Heart left ventricle (tissue), 16 donors: ENCODE measurements at regions of chr17 and their contacts with region 1.

Region 1: GRCh38 chr17:28842282-28843012 is at the start of gene FAM222B:
- DNase-seq: peak; percentile 84 to 94 (median 90)
- ATAC-seq: peak; percentile 93 to 100 (median 100)
- H3K4me3 ChIP-seq: peak within 1 kb of the TSS; percentile 53 to 94 (median 82)
- H3K27ac ChIP-seq: peak within 1 kb of the TSS; percentile 54 to 89 (median 78)
- H3K4me1 ChIP-seq: peaks cover 0 to 33% (median 8%) of the 10 kb centered on the region in 12 donors
- H3K27me3 ChIP-seq: no peaks in the 10 kb centered on the region
- CTCF ChIP-seq: peak in 2 of 12 donors; percentile 14 to 22
- POLR2A ChIP-seq: peak in 1 of 2 donors; percentile 71
- total RNA-seq, gene FAM222B: 14.4 to 33.2 (median 16.7) TPM

Region 2: DNA sequence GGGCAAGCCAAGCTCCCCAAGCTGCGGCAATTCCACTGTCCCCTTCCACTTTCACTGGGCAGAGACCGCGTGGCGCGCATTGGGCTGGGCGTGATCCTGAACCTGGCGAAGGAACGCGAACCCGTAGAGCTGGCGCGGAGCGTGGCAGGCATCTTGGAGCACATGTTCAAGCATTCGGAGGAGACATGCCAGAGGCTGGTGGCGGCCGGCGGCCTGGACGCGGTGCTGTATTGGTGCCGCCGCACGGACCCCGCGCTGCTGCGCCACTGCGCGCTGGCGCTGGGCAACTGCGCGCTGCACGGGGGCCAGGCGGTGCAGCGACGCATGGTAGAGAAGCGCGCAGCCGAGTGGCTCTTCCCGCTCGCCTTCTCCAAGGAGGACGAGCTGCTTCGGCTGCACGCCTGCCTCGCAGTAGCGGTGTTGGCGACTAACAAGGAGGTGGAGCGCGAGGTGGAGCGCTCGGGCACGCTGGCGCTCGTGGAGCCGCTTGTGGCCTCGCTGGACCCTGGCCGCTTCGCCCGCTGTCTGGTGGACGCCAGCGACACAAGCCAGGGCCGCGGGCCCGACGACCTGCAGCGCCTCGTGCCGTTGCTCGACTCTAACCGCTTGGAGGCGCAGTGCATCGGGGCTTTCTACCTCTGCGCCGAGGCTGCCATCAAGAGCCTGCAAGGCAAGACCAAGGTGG is 461.2 kb before region 1 on chr17:
- intact Hi-C with region 1: no loop called
- DNase-seq: no peak
- ATAC-seq: peak in 3 of 4 donors; percentile 27 to 35 (median 29)
- H3K4me3 ChIP-seq: peak overlapping the region in 8 of 12 donors; percentile 2 to 25 (median 10)
- H3K27ac ChIP-seq: no peak overlapping the region
- H3K4me1 ChIP-seq: peaks cover 0 to 25% (median 4%) of the 10 kb centered on the region in 12 donors
- H3K27me3 ChIP-seq: peaks cover 0 to 8% (median 0%) of the 10 kb centered on the region in 9 donors
- CTCF ChIP-seq: peak in 4 of 12 donors; percentile 7 to 25 (median 16)
- POLR2A ChIP-seq: no peak

Region 3: DNA sequence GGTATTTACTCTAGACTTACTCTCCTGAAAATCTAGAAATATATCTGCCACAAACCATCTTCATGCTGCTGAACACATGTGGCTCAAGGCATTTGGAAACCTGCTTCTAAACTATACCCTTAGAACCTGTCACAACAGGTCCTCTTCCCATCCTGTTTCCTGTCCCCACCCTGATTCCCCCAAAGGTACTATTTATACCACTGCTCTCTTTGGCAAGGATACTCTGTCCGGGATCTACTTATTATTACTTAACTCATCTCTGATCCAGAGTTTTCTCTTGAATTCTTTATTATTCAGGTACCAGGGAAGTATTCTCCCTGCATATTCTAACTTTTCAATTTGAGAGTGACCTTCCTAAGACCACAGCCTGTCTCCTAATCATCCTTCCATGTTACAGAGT is 65.3 kb before region 1 on chr17:
- intact Hi-C with region 1: loop called in 2 of 10 experiments (anchors 5 to 10 kb)
- DNase-seq: no peak
- ATAC-seq: peak in 1 of 4 donors; percentile 62
- H3K4me3 ChIP-seq: no peak overlapping the region
- H3K27ac ChIP-seq: peak overlapping the region in 1 of 12 donors; percentile 1
- H3K4me1 ChIP-seq: peaks cover 0 to 17% (median 10%) of the 10 kb centered on the region in 12 donors
- H3K27me3 ChIP-seq: no peaks in the 10 kb centered on the region
- CTCF ChIP-seq: no peak
- POLR2A ChIP-seq: no peak

Region 4: GRCh38 chr17:28796062-28796461 is 46.4 kb before region 1 on chr17:
- intact Hi-C with region 1: loop called in 1 of 10 experiments (anchors 5 kb)
- DNase-seq: no peak
- ATAC-seq: no peak
- H3K4me3 ChIP-seq: no peak overlapping the region
- H3K27ac ChIP-seq: no peak overlapping the region
- H3K4me1 ChIP-seq: peaks cover 0 to 12% (median 0%) of the 10 kb centered on the region in 12 donors
- H3K27me3 ChIP-seq: no peaks in the 10 kb centered on the region
- CTCF ChIP-seq: no peak
- POLR2A ChIP-seq: no peak

Region 5: GRCh38 chr17:28871056-28871579 is 28.7 kb after region 1 on chr17:
- intact Hi-C with region 1: no loop called
- DNase-seq: peak in 1 of 5 donors; percentile 25
- ATAC-seq: no peak
- H3K4me3 ChIP-seq: no peak overlapping the region
- H3K27ac ChIP-seq: peak overlapping the region in 1 of 12 donors; percentile 40
- H3K4me1 ChIP-seq: no peaks in the 10 kb centered on the region
- H3K27me3 ChIP-seq: no peaks in the 10 kb centered on the region
- CTCF ChIP-seq: no peak
- POLR2A ChIP-seq: no peak

Region 6: GRCh38 chr17:28883967-28884702 is 41.7 kb after region 1 on chr17:
- intact Hi-C with region 1: no loop called
- DNase-seq: no peak
- ATAC-seq: no peak
- H3K4me3 ChIP-seq: no peak overlapping the region
- H3K27ac ChIP-seq: no peak overlapping the region
- H3K4me1 ChIP-seq: peaks cover 0 to 16% (median 0%) of the 10 kb centered on the region in 12 donors
- H3K27me3 ChIP-seq: no peaks in the 10 kb centered on the region
- CTCF ChIP-seq: no peak
- POLR2A ChIP-seq: no peak

Region 7: GRCh38 chr17:28896884-28897768 is 54.7 kb after region 1 on chr17 and contains the start of gene FLOT2:
- intact Hi-C with region 1: loop called in 2 of 10 experiments (anchors 10 kb)
- DNase-seq: peak; percentile 63 to 82 (median 64)
- ATAC-seq: peak; percentile 25 to 87 (median 77)
- H3K4me3 ChIP-seq: peak within 1 kb of the TSS; percentile 72 to 98 (median 92)
- H3K27ac ChIP-seq: peak within 1 kb of the TSS; percentile 60 to 97 (median 86)
- H3K4me1 ChIP-seq: peaks cover 3 to 69% (median 31%) of the 10 kb centered on the region in 12 donors
- H3K27me3 ChIP-seq: no peaks in the 10 kb centered on the region
- CTCF ChIP-seq: peak in 6 of 12 donors; percentile 9 to 45 (median 20)
- POLR2A ChIP-seq: peak in 1 of 2 donors; percentile 54
- total RNA-seq, gene FLOT2: 81.1 to 139 (median 95.2) TPM

Region 8: GRCh38 chr17:28925912-28926365 is 83.5 kb after region 1 on chr17:
- intact Hi-C with region 1: no loop called
- DNase-seq: no peak
- ATAC-seq: peak in 3 of 4 donors; percentile 46 to 79 (median 68)
- H3K4me3 ChIP-seq: no peak overlapping the region
- H3K27ac ChIP-seq: peak overlapping the region in 3 of 12 donors; percentile 16 to 87 (median 39)
- H3K4me1 ChIP-seq: peaks cover 0 to 48% (median 8%) of the 10 kb centered on the region in 12 donors
- H3K27me3 ChIP-seq: no peaks in the 10 kb centered on the region
- CTCF ChIP-seq: no peak
- POLR2A ChIP-seq: no peak